ENCODE measurements at regions of chr9 and their contacts with region 1.

Region 1: GRCh38 chr9:70229579-70229978 is 29.2 kb upstream of the SMC5 start:
- DNase-seq: no peak

Region 2: GRCh38 chr9:70133253-70134208 is 96.0 kb before region 1 on chr9:
- intact Hi-C with region 1: loop called (anchors 5 kb)
- DNase-seq: no peak

Measured in cardiac septum (tissue), 1 donor.